Panc1 (cell line): ENCODE measurements at regions of chr1 and their contacts with region 1.

Region 1: DNA sequence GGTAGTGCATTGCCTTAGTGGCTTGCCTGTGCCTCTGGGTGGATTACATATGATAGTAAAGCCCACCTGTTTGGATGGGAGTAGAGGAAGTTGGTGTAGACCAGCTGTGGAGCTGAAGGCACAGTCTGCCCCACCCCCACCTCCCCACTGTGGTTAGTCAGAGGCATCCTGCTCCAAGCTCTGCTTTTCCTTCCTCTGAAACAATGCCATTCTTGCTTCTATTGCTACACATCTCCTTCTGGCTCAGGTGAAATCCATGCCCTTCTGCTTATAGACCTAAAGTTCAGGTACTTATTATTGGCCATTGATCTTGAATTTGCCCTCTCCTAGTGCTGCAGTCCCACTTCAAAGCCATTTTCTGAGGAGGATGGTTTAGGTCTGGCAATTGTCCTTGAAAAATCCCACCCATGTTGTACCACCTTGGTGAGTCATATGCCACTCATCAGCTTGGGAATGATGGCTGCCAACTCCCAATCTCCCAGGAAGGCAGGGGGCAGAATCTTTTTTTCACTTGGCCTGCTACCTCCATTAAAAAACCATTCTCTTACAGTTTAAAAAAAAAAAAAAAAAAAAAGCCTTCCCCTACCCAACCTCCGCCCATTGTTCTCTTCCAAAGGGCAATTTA is 6.7 kb upstream of the TXLNA start:
- DNase-seq: no peak
- ATAC-seq: no peak
- H3K4me3 ChIP-seq: no peak overlapping the region
- H3K27ac ChIP-seq: no peak overlapping the region
- H3K4me1 ChIP-seq: no peaks in the 10 kb centered on the region
- H3K27me3 ChIP-seq: no peaks in the 10 kb centered on the region
- CTCF ChIP-seq: no peak

Region 2: GRCh38 chr1:32142446-32143301 is 30.1 kb before region 1 on chr1:
- CTCF ChIA-PET with region 1: no interaction called
- POLR2A ChIA-PET with region 1: interaction called, 18 read pairs
- in situ Hi-C with region 1: no loop called
- intact Hi-C with region 1: no loop called
- DNase-seq: peak; percentile 28
- ATAC-seq: peak; percentile 75
- H3K4me3 ChIP-seq: no peak overlapping the region
- H3K27ac ChIP-seq: peak overlapping the region; percentile 49
- H3K4me1 ChIP-seq: peaks cover 53% of the 10 kb centered on the region
- H3K27me3 ChIP-seq: no peaks in the 10 kb centered on the region
- CTCF ChIP-seq: no peak

Region 3: DNA sequence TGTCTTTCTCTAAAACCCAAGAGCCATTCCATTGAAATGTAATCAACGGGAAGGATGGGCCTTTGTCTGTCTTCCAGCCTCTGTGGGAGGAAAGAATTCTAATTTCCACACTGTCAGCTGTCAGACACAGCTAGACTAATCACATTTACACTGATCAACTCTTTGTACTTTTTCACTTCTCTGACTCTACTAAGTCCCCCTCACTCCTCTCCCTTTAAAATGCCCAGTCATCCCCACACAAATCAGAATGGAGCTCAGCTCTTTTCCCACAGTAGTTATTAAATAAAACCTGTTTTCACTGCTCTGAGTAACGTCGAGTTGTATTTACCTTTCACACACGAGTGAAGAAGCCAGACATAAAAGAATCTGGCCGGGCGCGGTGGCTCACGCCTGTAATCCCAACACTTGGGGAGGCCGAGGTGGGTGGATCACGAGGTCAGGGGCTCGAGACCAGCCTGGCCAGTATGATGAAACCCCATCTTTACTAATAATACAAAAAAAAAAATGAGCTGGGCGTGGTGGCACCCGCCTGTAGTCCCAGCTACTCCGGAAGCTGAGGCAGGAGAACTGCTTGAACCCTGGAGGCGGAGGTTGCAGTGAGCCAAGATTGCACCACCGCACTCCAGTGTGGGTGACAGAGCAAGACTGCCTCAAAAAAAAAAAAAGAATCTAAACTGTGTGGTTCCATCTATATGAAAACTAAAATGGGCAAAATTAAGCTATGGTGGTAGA is 464.3 kb after region 1 on chr1:
- CTCF ChIA-PET with region 1: no interaction called
- POLR2A ChIA-PET with region 1: no interaction called
- in situ Hi-C with region 1: no loop called
- intact Hi-C with region 1: no loop called
- DNase-seq: no peak
- ATAC-seq: no peak
- H3K4me3 ChIP-seq: no peak overlapping the region
- H3K27ac ChIP-seq: no peak overlapping the region
- H3K4me1 ChIP-seq: no peaks in the 10 kb centered on the region
- H3K27me3 ChIP-seq: no peaks in the 10 kb centered on the region
- CTCF ChIP-seq: no peak